Endothelial cell of umbilical vein (primary cell): ENCODE measurements at regions of chr17 and their contacts with region 1.

Region 1: GRCh38 chr17:60677308-60678124 is at the start of gene BCAS3:
- DNase-seq: peak; percentile 99
- H3K4me3 ChIP-seq: peak within 1 kb of the TSS; percentile 57 to 76 (median 65)
- H3K27ac ChIP-seq: peak within 1 kb of the TSS; percentile 0
- H3K4me1 ChIP-seq: peaks cover 7% of the 10 kb centered on the region
- H3K27me3 ChIP-seq: no peaks in the 10 kb centered on the region
- CTCF ChIP-seq: no peak
- POLR2A ChIP-seq: peak; percentile 83
- total RNA-seq, gene BCAS3: 16.0 and 24.3 TPM in 2 replicates

Region 2: DNA sequence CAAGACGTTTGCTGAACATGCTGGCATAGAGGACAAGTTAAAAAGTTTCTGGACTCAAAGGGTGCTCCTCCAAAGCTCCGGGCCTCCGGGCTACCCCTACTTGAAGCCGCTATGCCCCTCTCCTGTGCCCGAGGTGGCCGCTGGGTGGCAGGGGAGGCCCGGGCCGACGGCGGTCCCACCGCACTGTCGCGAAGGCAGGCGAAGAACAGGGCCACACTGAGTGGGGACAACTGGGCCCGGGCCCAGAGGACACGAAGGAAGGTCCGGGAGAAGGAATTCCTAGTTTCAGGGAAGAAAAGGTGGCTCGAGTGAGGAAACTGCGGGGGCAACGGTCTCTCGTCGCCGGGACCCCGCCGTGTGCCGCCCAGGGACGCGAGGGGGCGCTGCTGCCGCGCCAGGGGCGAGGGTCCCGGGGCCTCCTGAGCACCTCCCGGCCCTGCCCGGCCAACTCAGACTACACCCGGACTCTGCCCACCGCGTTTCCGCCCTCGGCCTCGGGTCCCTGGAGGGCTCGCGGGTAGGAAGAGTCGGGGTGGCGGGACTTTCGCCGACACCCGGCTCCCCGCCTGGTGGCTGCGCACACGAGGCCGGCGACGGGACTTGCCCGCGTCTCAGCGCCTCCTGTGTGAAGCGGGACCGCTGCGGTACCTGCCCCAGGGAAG is 256.1 kb before region 1 on chr17:
- CTCF ChIA-PET with region 1: no interaction called
- POLR2A ChIA-PET with region 1: no interaction called
- dilution Hi-C with region 1: no loop called
- intact Hi-C with region 1: loop called (anchors 1 kb)
- DNase-seq: peak; percentile 71
- H3K4me3 ChIP-seq: peak overlapping the region; percentile 19 to 61 (median 46)
- H3K27ac ChIP-seq: peak overlapping the region; percentile 47
- H3K4me1 ChIP-seq: peaks cover 3% of the 10 kb centered on the region
- H3K27me3 ChIP-seq: no peaks in the 10 kb centered on the region
- CTCF ChIP-seq: peak; percentile 85 to 99
- POLR2A ChIP-seq: no peak

Region 3: DNA sequence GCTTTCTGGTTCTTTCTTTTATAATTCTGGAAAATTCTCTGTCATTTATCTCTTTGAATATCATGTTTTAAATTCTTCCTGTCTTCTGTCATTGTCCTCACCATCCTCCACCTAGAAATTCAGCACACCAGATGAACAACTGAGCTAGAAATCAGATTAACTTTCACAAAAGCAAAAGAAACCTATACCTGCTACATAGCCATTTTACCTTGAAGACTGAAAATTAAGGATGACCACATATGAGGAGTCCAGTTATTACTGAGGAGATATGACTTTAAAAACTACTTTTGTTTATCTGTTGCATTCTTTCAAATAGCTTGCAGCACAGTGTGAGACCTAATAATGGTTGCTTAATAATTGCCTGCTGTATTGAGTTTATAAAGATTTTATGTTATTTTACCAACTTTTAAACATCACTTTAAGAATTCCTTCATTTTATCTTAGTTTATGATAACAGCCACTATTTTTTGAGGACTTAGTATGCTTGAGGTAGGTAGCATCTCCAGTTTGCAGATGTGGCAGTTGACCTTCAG is 104.4 kb after region 1 on chr17:
- CTCF ChIA-PET with region 1: no interaction called
- POLR2A ChIA-PET with region 1: no interaction called
- dilution Hi-C with region 1: no loop called
- intact Hi-C with region 1: no loop called
- DNase-seq: no peak
- H3K4me3 ChIP-seq: no peak overlapping the region
- H3K27ac ChIP-seq: no peak overlapping the region
- H3K4me1 ChIP-seq: no peaks in the 10 kb centered on the region
- H3K27me3 ChIP-seq: no peaks in the 10 kb centered on the region
- CTCF ChIP-seq: no peak
- POLR2A ChIP-seq: no peak